ENCODE measurements at regions of chr3 and their contacts with region 1.

Region 1: GRCh38 chr3:128787256-128788240 is 61.6 kb downstream of the RAB7A start:
- DNase-seq: peak; percentile 69
- H3K4me3 Mint-ChIP-seq: peak overlapping the region; percentile 76
- H3K27ac Mint-ChIP-seq: peak overlapping the region; percentile 99
- H3K4me1 Mint-ChIP-seq: peaks cover 98% of the 10 kb centered on the region
- H3K27me3 Mint-ChIP-seq: no peaks in the 10 kb centered on the region

Region 2: DNA sequence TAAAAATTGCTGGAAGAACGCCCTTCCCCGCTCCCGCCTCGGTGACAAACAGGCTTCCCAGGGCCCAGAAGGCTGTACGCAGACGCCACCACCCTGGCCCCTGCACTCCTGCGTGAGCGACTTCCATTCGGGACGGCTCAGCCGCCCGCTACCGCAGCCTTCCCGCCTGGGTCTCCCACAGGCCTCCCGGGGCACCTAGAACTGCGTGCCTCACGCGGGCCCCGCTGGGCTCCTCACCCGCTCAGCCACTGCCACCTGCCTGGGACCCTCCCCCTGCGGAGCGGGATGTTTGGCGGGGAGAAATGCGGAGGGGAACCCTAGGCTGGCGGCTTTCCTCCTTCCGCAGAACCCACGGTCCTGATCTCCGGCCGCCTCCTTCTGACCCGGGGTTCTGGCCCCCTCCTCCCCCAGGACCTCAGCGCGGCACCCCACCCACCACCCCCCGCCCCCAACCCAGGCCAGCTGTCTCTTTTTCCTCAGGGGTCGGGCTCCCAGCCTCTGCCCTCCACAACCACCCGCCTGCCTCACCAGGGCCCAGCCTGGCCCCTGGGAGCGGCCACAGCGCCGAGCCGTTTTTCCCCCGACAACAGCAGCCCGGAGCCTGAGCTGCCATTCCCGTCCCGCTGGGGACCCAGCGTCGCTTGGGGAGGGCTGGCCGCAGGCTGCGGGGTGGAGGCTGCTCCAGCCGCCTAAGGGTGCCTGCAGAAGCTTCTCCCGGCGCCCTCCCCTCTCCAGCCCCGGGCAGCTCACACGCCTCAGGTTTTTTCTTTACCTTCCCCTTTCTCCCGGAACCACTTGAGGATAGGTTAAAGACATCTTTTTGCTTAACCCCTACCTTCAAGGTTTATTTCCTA is 89.1 kb before region 1 on chr3:
- CTCF ChIA-PET with region 1: no interaction called
- intact Hi-C with region 1: no loop called
- DNase-seq: peak; percentile 32
- H3K4me3 Mint-ChIP-seq: peak overlapping the region; percentile 65
- H3K27ac Mint-ChIP-seq: no peak overlapping the region
- H3K4me1 Mint-ChIP-seq: peaks cover 2% of the 10 kb centered on the region
- H3K27me3 Mint-ChIP-seq: no peaks in the 10 kb centered on the region

Region 3: GRCh38 chr3:128845778-128846485 is 58.4 kb after region 1 on chr3:
- CTCF ChIA-PET with region 1: interaction called, 6 read pairs
- intact Hi-C with region 1: loop called (anchors 1 kb)
- DNase-seq: peak; percentile 89
- H3K4me3 Mint-ChIP-seq: peak overlapping the region; percentile 69
- H3K27ac Mint-ChIP-seq: peak overlapping the region; percentile 79
- H3K4me1 Mint-ChIP-seq: peaks cover 17% of the 10 kb centered on the region
- H3K27me3 Mint-ChIP-seq: no peaks in the 10 kb centered on the region

Measured in activated naive CD4-positive, alpha-beta T cell treated with anti-CD3 and anti-CD28 coated beads for 36 hours (primary cell).